Left ventricle myocardium inferior (tissue), 1 donor: ENCODE measurements at regions of chr20 and their contacts with region 1.

Region 1: GRCh38 chr20:49338061-49338460 is 60.2 kb upstream of the ZNFX1 start:
- DNase-seq: no peak
- H3K4me3 ChIP-seq: no peak overlapping the region
- H3K27ac ChIP-seq: no peak overlapping the region
- H3K4me1 ChIP-seq: no peaks in the 10 kb centered on the region
- H3K27me3 ChIP-seq: peaks cover 31% of the 10 kb centered on the region
- CTCF ChIP-seq: no peak

Region 2: GRCh38 chr20:48685861-48686771 is 651.9 kb before region 1 on chr20:
- intact Hi-C with region 1: no loop called
- DNase-seq: peak; percentile 61
- H3K4me3 ChIP-seq: no peak overlapping the region
- H3K27ac ChIP-seq: peak overlapping the region; percentile 65
- H3K4me1 ChIP-seq: peaks cover 66% of the 10 kb centered on the region
- H3K27me3 ChIP-seq: no peaks in the 10 kb centered on the region
- CTCF ChIP-seq: no peak

Region 3: GRCh38 chr20:49207076-49207475 is 131.0 kb before region 1 on chr20:
- intact Hi-C with region 1: no loop called
- DNase-seq: no peak
- H3K4me3 ChIP-seq: no peak overlapping the region
- H3K27ac ChIP-seq: no peak overlapping the region
- H3K4me1 ChIP-seq: no peaks in the 10 kb centered on the region
- H3K27me3 ChIP-seq: no peaks in the 10 kb centered on the region
- CTCF ChIP-seq: no peak

Region 4: DNA sequence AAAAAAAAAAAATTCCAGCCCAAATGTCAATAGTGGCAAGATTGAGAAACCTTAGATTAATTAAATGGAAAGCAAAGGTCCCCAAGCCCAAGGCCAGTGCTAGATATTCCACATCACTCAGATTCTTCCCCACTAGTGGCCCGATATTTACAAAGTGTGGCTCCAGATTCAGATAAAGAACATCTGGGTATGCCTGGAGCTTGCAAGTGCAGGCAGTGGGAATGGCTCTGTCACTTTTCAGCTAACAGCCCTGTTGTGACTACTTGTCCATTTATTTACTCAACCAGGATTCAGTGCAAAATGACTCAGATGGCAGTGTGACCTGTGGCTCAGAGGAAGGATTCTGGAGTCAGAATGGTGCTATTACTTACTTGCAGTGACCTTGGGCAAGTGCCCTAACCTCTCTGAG is 152.6 kb after region 1 on chr20:
- intact Hi-C with region 1: no loop called
- DNase-seq: no peak
- H3K4me3 ChIP-seq: no peak overlapping the region
- H3K27ac ChIP-seq: no peak overlapping the region
- H3K4me1 ChIP-seq: no peaks in the 10 kb centered on the region
- H3K27me3 ChIP-seq: peaks cover 59% of the 10 kb centered on the region
- CTCF ChIP-seq: no peak

Region 5: GRCh38 chr20:49534255-49534712 is 196.2 kb after region 1 on chr20:
- intact Hi-C with region 1: loop called (anchors 10 kb)
- DNase-seq: no peak
- H3K4me3 ChIP-seq: no peak overlapping the region
- H3K27ac ChIP-seq: no peak overlapping the region
- H3K4me1 ChIP-seq: no peaks in the 10 kb centered on the region
- H3K27me3 ChIP-seq: peaks cover 15% of the 10 kb centered on the region
- CTCF ChIP-seq: peak; percentile 89